ENCODE measurements at regions of chr10 and their contacts with region 1.

Region 1: GRCh38 chr10:74977913-74978847 is 133.3 kb upstream of the SAMD8 start:
- DNase-seq: peak; percentile 68
- ATAC-seq: peak; percentile 84
- H3K4me3 Mint-ChIP-seq: peak overlapping the region; percentile 6
- H3K27ac Mint-ChIP-seq: peak overlapping the region; percentile 65
- H3K4me1 Mint-ChIP-seq: peaks cover 31% of the 10 kb centered on the region
- H3K27me3 Mint-ChIP-seq: no peaks in the 10 kb centered on the region

Region 2: GRCh38 chr10:74898201-74898976 is 79.8 kb before region 1 on chr10:
- CTCF ChIA-PET with region 1: no interaction called
- POLR2A ChIA-PET with region 1: no interaction called
- intact Hi-C with region 1: loop called in 1 of 2 experiments (anchors 5 kb)
- DNase-seq: peak; percentile 56
- ATAC-seq: peak; percentile 92
- H3K4me3 Mint-ChIP-seq: peak overlapping the region; percentile 39
- H3K27ac Mint-ChIP-seq: peak overlapping the region; percentile 82
- H3K4me1 Mint-ChIP-seq: peaks cover 62% of the 10 kb centered on the region
- H3K27me3 Mint-ChIP-seq: no peaks in the 10 kb centered on the region

Region 3: DNA sequence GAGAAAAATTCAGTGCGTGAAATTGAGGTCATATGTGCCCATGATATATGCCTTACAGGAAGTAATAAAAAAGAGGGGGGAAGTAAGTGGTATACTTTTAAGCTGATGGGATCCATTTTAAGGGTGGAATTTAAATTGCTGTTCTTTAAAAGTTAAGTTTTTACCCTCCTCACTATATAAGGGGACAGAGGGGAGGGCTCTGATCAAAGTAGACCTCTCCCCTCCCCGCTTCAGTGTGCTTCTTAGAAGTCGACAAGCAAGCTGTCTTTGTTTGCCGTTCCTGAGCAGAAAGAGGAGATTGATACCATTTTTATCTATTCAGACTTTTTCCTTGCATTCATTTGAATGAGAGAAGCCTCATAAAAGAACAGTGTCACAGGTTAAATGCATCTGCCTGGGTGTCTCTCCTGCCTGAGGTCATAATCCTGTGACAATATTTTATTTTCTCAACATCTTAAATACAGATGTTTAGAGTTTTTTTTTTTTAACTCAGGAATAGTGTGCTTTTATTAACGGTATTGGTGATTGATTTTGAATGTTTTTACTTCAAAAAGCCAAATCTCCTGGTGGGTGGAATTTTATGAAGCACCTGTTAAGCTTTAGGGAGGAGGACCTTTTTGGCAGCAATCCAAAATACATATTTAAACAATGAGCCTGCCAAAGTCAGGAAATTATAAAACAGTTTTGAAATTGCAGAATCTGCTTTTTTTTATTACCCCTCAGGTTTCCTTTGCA is 10.1 kb before region 1 on chr10:
- CTCF ChIA-PET with region 1: interaction called, 10 read pairs
- POLR2A ChIA-PET with region 1: no interaction called
- intact Hi-C with region 1: no loop called
- DNase-seq: no peak
- ATAC-seq: peak; percentile 36
- H3K4me3 Mint-ChIP-seq: peak overlapping the region; percentile 54
- H3K27ac Mint-ChIP-seq: peak overlapping the region; percentile 80
- H3K4me1 Mint-ChIP-seq: peaks cover 38% of the 10 kb centered on the region
- H3K27me3 Mint-ChIP-seq: no peaks in the 10 kb centered on the region

Measured in activated CD4-positive, alpha-beta T cell treated with anti-CD3 and anti-CD28 coated beads for 36 hours (primary cell).